GM12878 (cell line): ENCODE measurements at regions of chr1 and their contacts with region 1.

Region 1: GRCh38 chr1:166838766-166839599 is at the start of gene POGK:
- DNase-seq: peak; percentile 63
- ATAC-seq: peak; percentile 98
- H3K4me3 ChIP-seq: peak within 1 kb of the TSS; percentile 96
- H3K27ac ChIP-seq: peak within 1 kb of the TSS; percentile 79
- H3K4me1 ChIP-seq: peaks cover 5% of the 10 kb centered on the region; the same call in 1 of the 2 replicates
- H3K27me3 ChIP-seq: no peaks in the 10 kb centered on the region
- CTCF ChIP-seq: no peak
- EP300 ChIP-seq: no peak
- POLR2A ChIP-seq: peak; percentile 90
- RAD21 ChIP-seq: no peak
- polyA plus RNA-seq, gene POGK: 5.3 to 8.1 TPM

Region 2: DNA sequence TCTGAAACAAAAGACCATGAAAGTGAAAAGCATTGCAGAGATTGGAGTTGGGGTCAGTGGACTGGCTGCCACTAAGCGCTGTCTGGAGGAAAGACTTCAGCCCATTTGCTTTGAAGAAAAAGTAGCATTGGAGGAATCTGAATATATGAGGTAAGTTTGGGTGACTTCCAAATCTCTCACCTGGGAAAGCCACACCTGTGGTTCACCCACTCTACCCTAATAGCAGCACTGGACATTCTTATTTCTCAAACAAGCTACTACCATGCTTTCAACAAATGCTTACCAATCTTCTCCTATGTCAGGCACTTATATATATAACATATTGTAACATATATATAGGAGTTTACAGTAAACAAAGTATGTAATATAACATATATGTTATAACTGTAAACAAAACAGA is 75.7 kb before region 1 on chr1:
- CTCF ChIA-PET with region 1: no interaction called
- POLR2A ChIA-PET with region 1: no interaction called
- RAD21 ChIA-PET with region 1: no interaction called
- SMC1A ChIA-PET with region 1: no interaction called
- in situ Hi-C with region 1: no loop called
- intact Hi-C with region 1: no loop called
- DNase-seq: no peak
- ATAC-seq: no peak
- H3K4me3 ChIP-seq: no peak overlapping the region
- H3K27ac ChIP-seq: no peak overlapping the region
- H3K4me1 ChIP-seq: no peaks in the 10 kb centered on the region
- H3K27me3 ChIP-seq: no peaks in the 10 kb centered on the region
- CTCF ChIP-seq: no peak
- EP300 ChIP-seq: no peak
- POLR2A ChIP-seq: no peak
- RAD21 ChIP-seq: no peak

Region 3: DNA sequence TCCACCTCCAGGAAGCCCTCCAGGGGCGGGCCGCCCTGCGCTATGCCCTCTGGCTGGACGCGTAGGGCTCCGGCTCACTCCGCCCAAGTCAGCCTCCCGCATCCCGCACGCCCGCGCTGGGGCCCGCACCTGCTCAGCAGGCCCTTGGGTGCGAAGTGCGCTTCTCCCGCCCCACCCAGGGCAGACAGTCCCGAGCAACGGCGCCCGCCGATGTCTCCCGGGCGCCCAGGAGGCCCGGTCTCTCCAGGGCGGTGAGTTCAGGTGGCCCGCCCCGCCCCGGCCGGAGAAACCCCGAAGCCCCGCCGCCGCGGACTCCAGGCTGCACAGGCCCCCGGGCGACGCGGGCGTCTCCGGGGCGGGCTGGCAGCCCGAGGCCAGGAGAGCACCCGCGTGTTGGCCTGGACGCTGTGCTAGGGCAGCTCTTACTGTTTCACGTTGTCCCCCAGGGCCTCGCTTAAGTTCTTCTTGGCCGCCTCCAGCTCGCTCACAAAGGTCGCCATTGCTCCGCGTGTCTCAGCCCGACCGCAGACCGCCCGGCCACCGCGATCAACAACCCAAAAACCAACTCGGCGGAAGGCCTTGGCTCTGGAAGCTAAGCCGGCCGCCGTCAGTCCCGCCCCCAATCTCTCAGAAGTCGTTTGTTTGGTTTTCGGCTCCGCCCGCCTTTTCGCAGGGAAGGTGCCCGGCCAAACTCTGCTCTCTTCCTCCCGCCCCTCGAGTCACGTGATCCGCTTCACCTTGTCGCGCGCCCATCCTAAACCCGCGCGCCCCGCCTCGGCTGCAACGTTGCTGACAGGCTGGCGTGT is 37.0 kb after region 1 on chr1 and contains the start of gene TADA1:
- CTCF ChIA-PET with region 1: interaction called, 10 read pairs
- POLR2A ChIA-PET with region 1: interaction called, 10 read pairs
- RAD21 ChIA-PET with region 1: interaction called, 11 read pairs
- SMC1A ChIA-PET with region 1: interaction called, 4 read pairs
- in situ Hi-C with region 1: no loop called
- intact Hi-C with region 1: no loop called
- DNase-seq: peak; percentile 90
- ATAC-seq: peak; percentile 90
- H3K4me3 ChIP-seq: peak within 1 kb of the TSS; percentile 76
- H3K27ac ChIP-seq: peak within 1 kb of the TSS; percentile 95
- H3K4me1 ChIP-seq: peaks cover 5% of the 10 kb centered on the region; the same call in 1 of the 2 replicates
- H3K27me3 ChIP-seq: no peaks in the 10 kb centered on the region
- CTCF ChIP-seq: peak in 1 of 3 experiments; percentile 36; a peak in 3 of 6 replicates
- EP300 ChIP-seq: peak; percentile 22 to 52; a peak in 1 of 4 replicates
- POLR2A ChIP-seq: peak; percentile 86
- RAD21 ChIP-seq: peak; percentile 10; the same call in 1 of the 2 replicates
- polyA plus RNA-seq, gene TADA1: 31.5 to 38.6 TPM